ENCODE measurements at regions of chr19 and their contacts with region 1.

Region 1: GRCh38 chr19:5376928-5377327 is 36.3 kb upstream of the PTPRS start:
- DNase-seq: no peak
- H3K4me3 ChIP-seq: no peak overlapping the region
- H3K27ac ChIP-seq: no peak overlapping the region
- H3K4me1 ChIP-seq: no peaks in the 10 kb centered on the region
- H3K27me3 ChIP-seq: no peaks in the 10 kb centered on the region
- CTCF ChIP-seq: no peak

Region 2: DNA sequence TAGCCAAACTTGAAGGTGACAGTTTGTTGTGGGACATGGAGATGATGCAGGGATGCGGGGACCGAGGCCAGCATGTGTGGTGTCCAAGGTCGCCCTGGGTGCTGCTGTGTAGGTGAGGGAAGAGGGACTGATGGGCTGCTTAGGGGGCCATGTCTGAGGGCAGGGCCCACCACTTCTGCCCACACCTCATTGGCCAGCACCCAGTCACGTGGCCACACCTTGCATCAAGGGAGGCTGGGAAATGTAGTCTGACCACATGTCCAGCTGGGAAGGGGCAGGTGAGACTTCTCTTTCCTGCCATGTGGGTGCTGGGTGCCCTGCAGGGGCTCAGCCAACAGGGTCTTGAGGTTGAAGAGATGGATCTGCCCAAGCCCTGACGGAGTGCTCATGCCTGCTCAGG is 319.1 kb before region 1 on chr19:
- CTCF ChIA-PET with region 1: interaction called, 18 read pairs
- POLR2A ChIA-PET with region 1: no interaction called
- intact Hi-C with region 1: no loop called
- DNase-seq: no peak
- H3K4me3 ChIP-seq: no peak overlapping the region
- H3K27ac ChIP-seq: no peak overlapping the region
- H3K4me1 ChIP-seq: no peaks in the 10 kb centered on the region
- H3K27me3 ChIP-seq: no peaks in the 10 kb centered on the region
- CTCF ChIP-seq: no peak

Region 3: DNA sequence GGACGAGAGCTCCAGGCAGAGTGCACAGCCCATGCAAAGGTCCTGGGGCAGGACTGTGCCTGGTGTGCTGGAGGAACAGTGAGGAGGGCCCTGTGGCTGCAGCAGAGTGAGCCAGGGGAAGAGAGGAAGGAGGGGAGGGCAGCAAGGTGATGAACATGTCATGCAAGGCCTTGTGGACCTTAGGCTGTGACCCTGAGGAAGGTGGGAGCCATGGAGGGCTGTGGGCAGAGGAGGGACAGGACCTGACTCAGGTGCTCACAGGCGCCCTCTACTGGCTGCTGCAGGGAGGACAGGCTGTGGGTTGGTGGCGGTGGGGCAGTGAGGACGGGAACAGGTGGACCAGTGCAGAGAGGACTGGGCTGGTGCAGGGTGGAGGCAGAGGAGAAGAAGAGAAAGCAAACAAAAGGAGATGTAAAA is 206.6 kb before region 1 on chr19:
- CTCF ChIA-PET with region 1: interaction called, 17 read pairs
- POLR2A ChIA-PET with region 1: no interaction called
- intact Hi-C with region 1: no loop called
- DNase-seq: no peak
- H3K4me3 ChIP-seq: no peak overlapping the region
- H3K27ac ChIP-seq: peak overlapping the region; percentile 100
- H3K4me1 ChIP-seq: peaks cover 36% of the 10 kb centered on the region
- H3K27me3 ChIP-seq: no peaks in the 10 kb centered on the region
- CTCF ChIP-seq: peak; percentile 67

Region 4: GRCh38 chr19:5340637-5341447 is 36.1 kb before region 1 on chr19 and contains the start of gene PTPRS:
- CTCF ChIA-PET with region 1: interaction called, 13 read pairs
- POLR2A ChIA-PET with region 1: no interaction called
- intact Hi-C with region 1: no loop called
- DNase-seq: peak in 1 of 2 experiments; percentile 86
- H3K4me3 ChIP-seq: peak within 1 kb of the TSS; percentile 69
- H3K27ac ChIP-seq: no peak within 1 kb of the TSS
- H3K4me1 ChIP-seq: peaks cover 13% of the 10 kb centered on the region
- H3K27me3 ChIP-seq: no peaks in the 10 kb centered on the region
- CTCF ChIP-seq: no peak
- total RNA-seq, gene PTPRS: 131 and 183 TPM in 2 replicates

Region 5: GRCh38 chr19:5430237-5430636 is 53.3 kb after region 1 on chr19:
- CTCF ChIA-PET with region 1: no interaction called
- POLR2A ChIA-PET with region 1: no interaction called
- intact Hi-C with region 1: no loop called
- DNase-seq: no peak
- H3K4me3 ChIP-seq: no peak overlapping the region
- H3K27ac ChIP-seq: no peak overlapping the region
- H3K4me1 ChIP-seq: no peaks in the 10 kb centered on the region
- H3K27me3 ChIP-seq: peaks cover 19% of the 10 kb centered on the region
- CTCF ChIP-seq: no peak

Measured in PC-9 (cell line).